WTC11 (cell line): ENCODE measurements at regions of chr4 and their contacts with region 1.

Region 1: DNA sequence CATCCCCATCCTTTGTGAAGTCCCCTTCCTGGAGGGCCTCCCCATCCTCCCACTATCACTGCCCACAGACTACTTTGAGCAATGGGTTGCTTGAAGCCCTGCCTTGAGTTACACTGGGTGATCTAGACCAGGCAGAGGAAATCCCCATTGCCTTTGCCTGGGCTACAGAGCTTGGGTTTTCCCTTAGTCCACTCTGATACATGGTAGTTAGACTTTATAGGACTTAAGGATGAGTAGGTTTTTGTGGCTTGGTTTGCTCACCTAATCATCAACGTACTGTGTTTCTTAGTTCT is 56.6 kb downstream of the TMEM131L start:
- DNase-seq: no peak
- ATAC-seq: peak; percentile 31
- H3K4me3 Mint-ChIP-seq: no peak overlapping the region
- H3K27ac Mint-ChIP-seq: peak overlapping the region; percentile 48; the same call in 1 of the 2 replicates
- H3K4me1 Mint-ChIP-seq: peaks cover 49% of the 10 kb centered on the region
- H3K27me3 Mint-ChIP-seq: no peaks in the 10 kb centered on the region
- CTCF ChIP-seq: no peak

Region 2: DNA sequence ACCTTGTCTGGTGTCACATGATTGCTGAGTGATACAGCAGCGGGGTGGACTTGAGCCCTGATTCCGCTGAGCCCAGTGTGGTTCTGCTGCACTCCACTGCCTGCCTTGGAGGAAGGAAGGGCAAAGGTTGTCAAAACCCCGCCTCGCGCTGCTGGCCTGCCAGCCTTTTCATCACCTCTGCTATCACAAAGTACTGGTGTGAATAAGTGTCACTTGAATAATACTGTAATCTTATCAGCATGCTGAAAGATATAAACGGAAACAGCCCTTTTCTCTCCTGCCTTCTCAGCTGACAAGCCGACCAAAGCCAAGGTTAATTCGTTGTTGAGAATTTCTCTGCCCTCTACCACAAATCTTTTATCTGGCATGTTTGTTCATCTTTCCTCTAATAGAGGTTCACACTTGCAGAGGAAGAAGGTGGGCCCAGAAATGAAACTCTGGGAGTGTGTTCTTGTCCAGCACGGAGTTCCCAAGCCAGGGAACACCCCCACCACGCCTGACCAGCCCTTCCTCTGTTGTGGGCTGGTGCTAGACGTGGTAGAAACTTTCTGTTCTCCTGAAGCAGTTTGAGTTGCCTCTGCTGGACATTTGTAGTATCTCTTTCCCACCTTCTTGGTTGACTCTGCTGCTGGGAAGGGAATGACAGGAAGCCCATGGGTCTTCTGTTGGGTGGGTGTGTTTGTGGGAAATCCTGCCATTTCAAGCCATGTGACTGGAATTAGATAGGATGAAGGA is 565.1 kb before region 1 on chr4:
- CTCF ChIA-PET with region 1: no interaction called
- POLR2A ChIA-PET with region 1: no interaction called
- DNase-seq: no peak
- ATAC-seq: peak; percentile 38
- H3K4me3 Mint-ChIP-seq: no peak overlapping the region
- H3K27ac Mint-ChIP-seq: peak overlapping the region; percentile 39
- H3K4me1 Mint-ChIP-seq: peaks cover 49% of the 10 kb centered on the region
- H3K27me3 Mint-ChIP-seq: no peaks in the 10 kb centered on the region
- CTCF ChIP-seq: no peak

Region 3: GRCh38 chr4:153535772-153536513 is 13.2 kb after region 1 on chr4:
- CTCF ChIA-PET with region 1: interaction called, 10 read pairs
- POLR2A ChIA-PET with region 1: no interaction called
- DNase-seq: peak; percentile 44
- ATAC-seq: peak; percentile 87
- H3K4me3 Mint-ChIP-seq: peak overlapping the region; percentile 22; the same call in 1 of the 2 replicates
- H3K27ac Mint-ChIP-seq: peak overlapping the region; percentile 87
- H3K4me1 Mint-ChIP-seq: peaks cover 62% of the 10 kb centered on the region
- H3K27me3 Mint-ChIP-seq: no peaks in the 10 kb centered on the region
- CTCF ChIP-seq: no peak

Region 4: DNA sequence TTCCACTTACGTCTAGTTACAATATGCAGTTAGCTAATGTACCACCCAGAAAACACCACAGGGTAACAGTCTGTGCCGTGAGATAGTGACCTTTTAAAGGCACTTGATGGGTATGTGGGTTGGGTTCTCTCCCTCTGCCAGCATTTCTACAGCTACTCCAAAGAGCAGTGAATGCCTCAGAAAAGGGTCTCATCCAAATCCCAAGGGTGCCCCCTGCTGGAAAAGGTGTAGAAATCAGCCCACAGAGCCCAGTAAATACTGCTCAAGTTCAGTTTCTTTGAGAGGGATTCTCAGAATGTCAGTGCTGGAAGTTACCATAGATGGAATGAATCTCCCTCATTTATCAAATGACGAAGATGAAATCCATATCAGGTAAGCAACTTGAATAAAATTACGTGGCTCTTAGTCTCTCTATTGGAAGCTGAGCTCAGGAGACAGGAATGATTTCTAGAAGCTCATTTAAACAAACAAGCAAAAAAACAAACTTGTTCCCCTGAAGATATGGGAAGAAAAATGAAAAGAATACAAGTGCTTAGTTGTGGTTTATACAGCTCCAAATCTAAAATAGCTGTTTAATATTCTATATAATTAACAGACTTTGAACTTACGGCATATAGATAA is 227.6 kb after region 1 on chr4:
- CTCF ChIA-PET with region 1: no interaction called
- POLR2A ChIA-PET with region 1: no interaction called
- DNase-seq: peak; percentile 68
- ATAC-seq: peak; percentile 95
- H3K4me3 Mint-ChIP-seq: no peak overlapping the region
- H3K27ac Mint-ChIP-seq: no peak overlapping the region
- H3K4me1 Mint-ChIP-seq: no peaks in the 10 kb centered on the region
- H3K27me3 Mint-ChIP-seq: no peaks in the 10 kb centered on the region
- CTCF ChIP-seq: peak; percentile 53